ENCODE measurements at regions of chr1 and their contacts with region 1.

Region 1: GRCh38 chr1:15994590-15995351 is 9.3 kb upstream of the SRARP start:
- DNase-seq: peak in 9 of 10 donors; percentile 43 to 97 (median 74)

Region 2: DNA sequence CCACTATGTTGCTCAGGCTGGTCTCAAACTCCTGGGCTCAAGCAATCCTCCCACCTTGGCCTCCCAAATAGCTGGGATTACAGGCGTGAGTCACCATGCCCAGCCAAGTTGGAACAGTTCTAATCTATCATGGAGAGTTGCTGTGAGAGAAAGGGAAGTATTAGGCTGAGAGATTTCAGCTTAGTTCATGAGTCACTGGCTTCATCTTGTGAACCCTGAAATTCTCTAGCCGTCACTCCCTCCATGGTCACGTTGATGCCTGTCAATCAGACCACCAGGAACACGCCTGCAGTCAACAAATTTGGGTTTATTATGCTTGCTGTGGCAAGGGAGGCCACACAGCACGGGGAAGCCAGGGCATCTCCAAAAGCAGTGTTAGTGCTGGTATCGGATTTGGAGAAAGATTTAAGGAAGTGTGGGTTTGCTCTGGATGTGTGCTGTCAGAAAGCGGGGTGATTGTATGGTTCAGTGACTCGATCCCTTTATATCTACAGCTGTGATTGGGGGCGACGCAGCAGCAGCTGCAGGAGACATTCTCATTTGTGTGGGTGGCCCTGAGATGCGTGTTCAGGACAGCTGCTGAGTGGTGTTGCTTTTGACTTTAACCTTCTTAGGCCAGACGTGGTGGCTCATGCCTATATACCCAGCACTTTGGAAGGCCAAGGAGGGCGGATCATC is 206.0 kb before region 1 on chr1:
- intact Hi-C with region 1: loop called (anchors 1 kb)
- DNase-seq: no peak

Region 3: DNA sequence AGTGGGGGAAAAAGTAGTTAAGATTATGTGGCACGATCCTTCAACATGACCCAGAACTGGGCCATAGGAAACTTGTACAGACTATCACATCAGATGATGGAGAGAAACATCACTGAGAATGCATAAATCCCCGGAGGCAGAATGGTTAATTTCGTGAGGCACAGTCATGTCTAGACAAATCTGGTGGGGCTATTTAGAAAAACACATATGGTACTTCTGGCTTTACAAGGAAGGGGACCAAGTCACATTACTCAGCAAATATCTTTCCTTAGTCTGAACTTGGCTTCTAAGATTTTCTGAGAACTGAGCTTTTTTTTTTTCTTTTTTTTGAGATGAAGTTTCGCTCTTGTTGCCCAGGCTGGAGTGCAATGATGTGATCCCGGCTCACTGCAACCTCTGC is 178.1 kb before region 1 on chr1:
- intact Hi-C with region 1: loop called (anchors 5 kb)
- DNase-seq: no peak

Region 4: GRCh38 chr1:15885701-15886610 is 108.8 kb before region 1 on chr1:
- intact Hi-C with region 1: no loop called
- DNase-seq: peak; percentile 90 to 99 (median 96)